Activated naive CD4-positive, alpha-beta T cell treated with anti-CD3 and anti-CD28 coated beads for 36 hours (primary cell): ENCODE measurements at regions of chr14 and their contacts with region 1.

Region 1: DNA sequence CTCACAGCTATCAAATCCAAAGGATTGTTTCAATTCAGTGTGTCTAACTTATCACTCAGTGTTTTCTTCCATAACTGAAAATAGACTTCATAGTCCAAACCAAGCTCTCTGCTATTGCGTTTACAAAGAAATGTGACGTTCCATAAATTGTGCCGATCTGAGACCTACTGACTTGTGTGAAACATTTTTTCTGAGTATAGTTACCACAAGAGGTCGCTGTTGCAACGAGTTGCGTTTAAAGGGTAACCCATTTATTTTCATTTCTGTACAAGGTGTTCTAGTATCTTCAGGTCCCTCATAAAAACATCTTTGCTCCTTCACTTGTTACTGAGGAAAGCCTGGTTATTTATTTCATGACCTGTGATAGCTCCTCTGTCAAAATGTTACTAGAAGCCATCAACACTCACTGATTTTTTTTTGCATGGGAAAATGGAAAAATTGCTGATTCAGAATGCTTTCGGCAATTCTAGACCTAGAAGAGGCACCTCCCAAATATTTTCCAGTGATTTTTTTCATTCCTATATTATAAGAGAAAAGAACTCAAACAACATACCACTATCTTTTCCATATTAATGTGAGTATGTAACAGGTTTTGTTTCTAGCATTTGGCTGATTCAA is 60.9 kb upstream of the OR4E1 start:
- DNase-seq: peak; percentile 66
- H3K4me3 Mint-ChIP-seq: peak overlapping the region; percentile 61
- H3K27ac Mint-ChIP-seq: peak overlapping the region; percentile 65
- H3K4me1 Mint-ChIP-seq: peaks cover 16% of the 10 kb centered on the region
- H3K27me3 Mint-ChIP-seq: peaks cover 16% of the 10 kb centered on the region

Region 2: GRCh38 chr14:21711360-21711961 is 23.1 kb before region 1 on chr14:
- CTCF ChIA-PET with region 1: interaction called, 13 read pairs
- intact Hi-C with region 1: no loop called
- DNase-seq: peak; percentile 57
- H3K4me3 Mint-ChIP-seq: peak overlapping the region; percentile 67
- H3K27ac Mint-ChIP-seq: peak overlapping the region; percentile 68
- H3K4me1 Mint-ChIP-seq: peaks cover 5% of the 10 kb centered on the region
- H3K27me3 Mint-ChIP-seq: peaks cover 2% of the 10 kb centered on the region

Region 3: DNA sequence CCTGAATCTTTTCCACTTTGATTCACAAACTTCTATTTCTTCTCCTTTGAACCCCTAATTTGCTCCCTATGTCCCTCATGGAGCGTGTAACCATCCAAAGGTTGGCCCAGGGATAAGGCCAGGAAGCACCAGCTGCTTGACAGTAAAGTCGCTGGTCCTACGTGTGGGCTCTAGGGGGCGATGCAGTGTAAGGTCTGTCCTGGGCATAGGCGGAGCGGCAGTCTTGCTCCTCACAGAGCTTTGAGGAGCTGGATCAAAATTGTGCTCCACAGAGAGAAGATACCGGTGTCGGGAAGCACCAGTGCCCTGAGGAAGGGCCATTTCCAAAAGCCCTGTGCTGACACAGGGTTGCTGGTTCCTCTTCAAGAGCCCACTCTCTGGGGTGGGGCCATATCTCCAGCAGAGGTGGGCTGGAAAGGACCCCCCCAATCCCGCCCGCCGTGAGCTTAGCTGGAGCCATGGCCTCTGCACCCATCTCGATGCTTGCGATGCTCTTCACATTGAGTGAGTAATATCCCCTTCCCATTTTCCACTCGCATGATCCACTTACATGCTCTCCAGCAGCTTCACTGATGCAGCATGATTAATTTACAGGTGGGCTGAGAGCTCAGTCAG is 11.0 kb before region 1 on chr14:
- CTCF ChIA-PET with region 1: interaction called, 27 read pairs
- intact Hi-C with region 1: no loop called
- DNase-seq: peak; percentile 68
- H3K4me3 Mint-ChIP-seq: peak overlapping the region; percentile 71
- H3K27ac Mint-ChIP-seq: peak overlapping the region; percentile 71
- H3K4me1 Mint-ChIP-seq: no peaks in the 10 kb centered on the region
- H3K27me3 Mint-ChIP-seq: peaks cover 12% of the 10 kb centered on the region

Region 4: GRCh38 chr14:21748869-21749303 is 14.3 kb after region 1 on chr14:
- CTCF ChIA-PET with region 1: interaction called, 9 read pairs
- intact Hi-C with region 1: loop called (anchors 2 kb)
- DNase-seq: peak; percentile 81
- H3K4me3 Mint-ChIP-seq: peak overlapping the region; percentile 71
- H3K27ac Mint-ChIP-seq: peak overlapping the region; percentile 67
- H3K4me1 Mint-ChIP-seq: peaks cover 10% of the 10 kb centered on the region
- H3K27me3 Mint-ChIP-seq: peaks cover 4% of the 10 kb centered on the region

Region 5: GRCh38 chr14:21825149-21825743 is 90.7 kb after region 1 on chr14:
- CTCF ChIA-PET with region 1: interaction called, 4 read pairs
- intact Hi-C with region 1: loop called (anchors 10 kb)
- DNase-seq: peak; percentile 68
- H3K4me3 Mint-ChIP-seq: peak overlapping the region; percentile 71
- H3K27ac Mint-ChIP-seq: peak overlapping the region; percentile 15
- H3K4me1 Mint-ChIP-seq: peaks cover 4% of the 10 kb centered on the region
- H3K27me3 Mint-ChIP-seq: peaks cover 17% of the 10 kb centered on the region